Gastrocnemius medialis (tissue), 4 donors: ENCODE measurements at regions of chr19 and their contacts with region 1.

Region 1: DNA sequence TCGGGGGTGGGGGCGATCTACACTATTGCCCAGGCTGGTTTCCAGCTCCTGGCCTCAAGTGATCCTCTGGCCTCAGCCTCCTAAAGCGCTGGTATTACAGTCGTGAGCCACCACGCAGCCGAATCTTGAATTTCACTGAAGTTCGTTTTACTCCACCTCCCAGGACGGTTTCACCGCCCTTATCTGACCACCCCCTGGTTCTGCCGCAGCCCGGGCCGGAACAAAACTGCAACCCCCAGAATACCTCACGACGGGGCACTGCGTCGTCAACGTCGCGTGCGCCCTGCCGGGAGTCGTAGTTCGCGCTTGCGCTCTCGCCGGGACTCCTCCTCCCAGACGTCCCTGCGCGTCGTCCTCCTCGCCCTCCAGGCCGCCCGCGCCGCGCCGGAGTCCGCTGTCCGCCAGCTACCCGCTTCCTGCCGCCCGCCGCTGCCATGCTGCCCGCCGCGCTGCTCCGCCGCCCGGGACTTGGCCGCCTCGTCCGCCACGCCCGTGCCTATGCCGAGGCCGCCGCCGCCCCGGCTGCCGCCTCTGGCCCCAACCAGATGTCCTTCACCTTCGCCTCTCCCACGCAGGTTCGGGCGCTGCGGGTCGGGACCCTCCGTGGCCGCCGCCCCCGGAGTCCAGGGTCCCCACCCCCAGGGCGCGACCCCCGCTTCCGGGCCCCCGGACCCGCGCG is at the start of gene ATP5F1D:
- DNase-seq: peak; percentile 93 to 94
- ATAC-seq: peak; percentile 37 to 48
- H3K4me3 ChIP-seq: peak within 1 kb of the TSS; percentile 75 to 97 (median 81)
- H3K27ac ChIP-seq: peak within 1 kb of the TSS; percentile 93 to 100 (median 97)
- H3K4me1 ChIP-seq: peaks cover 52 to 67% of the 10 kb centered on the region in 2 donors
- H3K27me3 ChIP-seq: peaks cover 0 to 5% (median 0%) of the 10 kb centered on the region in 3 donors
- CTCF ChIP-seq: no peak
- POLR2A ChIP-seq: peak; percentile 97 to 98
- total RNA-seq, gene ATP5F1D: 189 to 442 (median 273) TPM

Region 2: DNA sequence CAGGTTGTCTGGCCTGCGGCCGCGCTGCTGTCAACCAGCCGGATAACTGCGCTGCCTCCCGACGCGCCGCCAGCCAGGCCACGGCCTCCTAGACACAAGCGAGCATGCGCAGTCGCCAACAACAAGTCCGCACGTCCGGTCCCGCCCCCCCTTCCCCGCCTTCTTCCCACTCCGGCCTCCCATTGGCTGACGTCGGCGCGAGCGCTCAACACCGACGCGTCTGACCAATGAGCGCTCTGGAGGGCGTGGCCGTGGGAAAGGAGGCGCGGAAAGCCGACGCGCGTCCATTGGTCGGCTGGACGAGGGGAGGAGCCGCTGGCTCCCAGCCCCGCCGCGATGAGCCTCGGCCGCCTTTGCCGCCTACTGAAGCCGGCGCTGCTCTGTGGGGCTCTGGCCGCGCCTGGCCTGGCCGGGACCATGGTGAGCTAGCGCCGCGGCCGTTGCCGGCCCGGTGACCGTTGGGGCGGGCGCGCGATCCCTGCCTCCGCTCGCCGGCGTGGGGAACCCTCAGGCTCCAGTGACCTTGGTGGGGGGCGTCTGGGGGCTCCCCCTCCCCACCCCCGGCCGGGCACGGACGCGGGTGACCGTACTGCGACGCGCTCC is 137.7 kb before region 1 on chr19 and contains the start of gene GPX4:
- in situ Hi-C with region 1: no loop called
- intact Hi-C with region 1: loop called (anchors 2 kb)
- DNase-seq: peak; percentile 99
- ATAC-seq: peak; percentile 68 to 73
- H3K4me3 ChIP-seq: peak within 1 kb of the TSS; percentile 69 to 98 (median 83)
- H3K27ac ChIP-seq: peak within 1 kb of the TSS; percentile 95 to 100 (median 98)
- H3K4me1 ChIP-seq: peaks cover 42 to 47% of the 10 kb centered on the region in 2 donors
- H3K27me3 ChIP-seq: no peaks in the 10 kb centered on the region
- CTCF ChIP-seq: no peak
- POLR2A ChIP-seq: peak; percentile 92 to 99
- total RNA-seq, gene GPX4: 616 to 907 (median 819) TPM

Region 3: DNA sequence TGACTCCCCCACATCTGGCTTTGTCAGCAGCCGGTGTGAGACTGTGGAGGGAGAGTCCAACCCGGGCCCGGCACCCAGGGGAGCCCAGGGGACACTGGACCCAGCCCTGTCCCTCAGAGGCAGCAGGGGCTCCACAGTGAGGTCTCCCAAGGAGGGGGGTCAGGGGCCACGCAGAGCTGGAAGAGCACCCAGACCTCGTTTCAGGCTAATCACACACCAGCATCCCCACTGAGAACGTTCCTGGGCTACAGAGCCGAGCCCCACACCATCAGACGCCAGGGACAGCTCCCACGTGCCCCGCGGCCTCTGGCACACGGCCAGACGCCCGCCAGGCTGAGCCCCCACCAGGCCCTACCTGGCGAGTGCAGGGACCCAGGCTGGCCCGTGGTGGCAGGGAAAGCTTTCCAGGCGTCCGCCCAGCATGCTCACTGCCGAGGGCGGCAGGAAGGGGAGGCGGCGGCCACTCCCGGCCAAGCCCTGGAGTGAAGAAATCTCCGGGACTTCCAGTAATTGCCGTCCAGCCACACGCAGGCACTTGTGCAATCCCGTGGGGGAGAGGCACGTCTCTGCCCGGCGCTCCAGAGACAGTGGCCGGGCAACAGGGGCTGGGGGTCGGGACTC is 86.7 kb before region 1 on chr19:
- in situ Hi-C with region 1: no loop called
- intact Hi-C with region 1: loop called (anchors 5 kb)
- DNase-seq: peak; percentile 89 to 94
- ATAC-seq: peak; percentile 82 to 90
- H3K4me3 ChIP-seq: peak overlapping the region; percentile 22 to 50 (median 38)
- H3K27ac ChIP-seq: peak overlapping the region; percentile 86 to 96 (median 92)
- H3K4me1 ChIP-seq: peaks cover 48 to 52% of the 10 kb centered on the region in 2 donors
- H3K27me3 ChIP-seq: no peaks in the 10 kb centered on the region
- CTCF ChIP-seq: no peak
- POLR2A ChIP-seq: peak; percentile 81 to 84

Region 4: GRCh38 chr19:1221141-1221903 is 20.2 kb before region 1 on chr19:
- in situ Hi-C with region 1: no loop called
- intact Hi-C with region 1: loop called (anchors 1 kb)
- DNase-seq: peak; percentile 52 to 87
- ATAC-seq: peak; percentile 29 to 42
- H3K4me3 ChIP-seq: no peak overlapping the region
- H3K27ac ChIP-seq: peak overlapping the region; percentile 68 to 97 (median 95)
- H3K4me1 ChIP-seq: peaks cover 36 to 58% of the 10 kb centered on the region in 2 donors
- H3K27me3 ChIP-seq: no peaks in the 10 kb centered on the region
- CTCF ChIP-seq: peak; percentile 67 to 93 (median 83)
- POLR2A ChIP-seq: no peak